ENCODE measurements at regions of chr11 and their contacts with region 1.

Region 1: GRCh38 chr11:76201672-76202365 is 4.5 kb downstream of the WNT11 start:
- DNase-seq: no peak

Region 2: DNA sequence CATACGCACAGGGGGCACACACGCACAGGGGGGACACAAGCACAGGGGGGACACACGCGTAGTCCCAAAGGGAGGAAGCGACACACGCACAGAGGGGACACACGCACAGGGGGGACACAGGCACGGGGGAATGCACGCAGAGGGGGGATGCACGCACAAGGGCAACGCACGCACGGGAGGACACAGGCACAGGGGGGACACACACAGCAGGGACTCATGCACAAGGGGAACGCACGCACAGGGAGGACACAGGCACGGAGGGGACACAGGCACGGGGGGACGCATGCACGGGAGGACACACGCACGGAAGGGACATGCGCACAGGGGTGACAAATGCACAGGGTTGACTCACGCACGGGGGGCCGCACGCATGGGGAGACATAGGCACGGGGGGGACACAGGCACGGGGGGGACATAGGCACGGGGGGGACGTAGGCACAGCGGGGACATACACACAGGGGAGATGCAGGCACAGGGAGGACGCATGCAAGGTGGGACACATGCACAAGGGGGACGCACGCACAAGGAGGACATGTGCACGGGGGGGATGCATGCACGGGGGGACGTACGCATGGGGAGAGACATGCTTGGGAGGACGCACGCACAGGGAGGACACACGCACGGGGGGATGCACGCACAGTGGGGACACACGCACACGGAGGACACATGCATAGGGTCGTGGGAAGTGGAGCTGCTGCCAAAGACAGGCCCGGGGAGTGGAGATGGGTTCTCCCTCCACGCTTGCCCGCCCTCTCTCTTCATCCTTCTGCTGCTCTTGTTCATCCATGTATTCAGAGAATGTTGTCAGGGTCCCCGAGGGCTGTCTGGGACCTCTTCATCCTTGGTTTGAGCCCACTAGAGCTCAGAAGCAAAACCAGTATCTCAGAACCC is 36.7 kb before region 1 on chr11:
- intact Hi-C with region 1: loop called in 1 of 2 experiments (anchors 1 kb)
- DNase-seq: no peak

Region 3: DNA sequence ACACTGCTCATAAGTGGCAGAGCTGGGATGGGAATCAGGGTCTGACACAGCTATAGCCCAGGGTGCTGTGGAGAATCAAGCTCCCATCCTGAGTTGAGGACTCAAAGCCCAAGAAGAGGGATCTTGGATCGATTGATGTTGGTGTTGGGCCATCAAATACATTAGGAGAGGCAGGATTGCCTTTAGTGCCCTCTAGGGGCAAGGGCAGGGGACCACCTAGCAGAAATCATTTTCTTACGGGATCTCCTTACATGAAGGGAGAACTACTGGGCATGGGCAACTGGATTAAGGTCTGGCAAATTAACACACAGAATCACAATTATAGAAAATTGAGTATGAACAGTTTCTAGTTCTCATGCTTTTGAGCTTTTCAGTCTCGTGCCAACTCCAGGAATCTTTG is 218.1 kb after region 1 on chr11:
- intact Hi-C with region 1: no loop called
- DNase-seq: no peak